HepG2 (cell line): ENCODE measurements at regions of chr12 and their contacts with region 1.

Region 1: GRCh38 chr12:74689071-74689655 is 151.5 kb downstream of the ATXN7L3B start:
- DNase-seq: peak; percentile 20
- ATAC-seq: no peak
- H3K4me3 ChIP-seq: no peak overlapping the region
- H3K27ac ChIP-seq: no peak overlapping the region
- H3K4me1 ChIP-seq: peaks cover 9% of the 10 kb centered on the region; the same call in 1 of the 2 replicates
- H3K27me3 ChIP-seq: no peaks in the 10 kb centered on the region
- CTCF ChIP-seq: peak; percentile 48
- EP300 ChIP-seq: no peak
- POLR2A ChIP-seq: no peak
- RAD21 ChIP-seq: no peak

Region 2: DNA sequence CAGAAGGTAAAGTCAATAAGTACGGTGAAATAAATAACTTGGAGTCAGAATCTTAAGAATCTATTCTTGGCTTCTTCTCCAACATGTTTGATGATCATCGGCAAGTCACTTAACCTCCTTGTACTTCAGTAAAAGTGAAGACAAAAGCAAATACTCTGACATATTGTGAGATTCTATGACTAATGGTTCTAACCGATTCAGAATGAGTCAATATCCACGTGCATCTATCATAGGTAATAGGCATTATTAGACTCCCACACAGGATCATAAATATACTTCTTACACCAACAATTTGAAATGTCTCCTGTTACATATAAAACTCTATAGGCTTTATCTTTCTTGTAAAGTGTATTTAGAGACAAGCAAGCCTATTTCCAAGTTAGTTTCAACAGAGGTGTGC is 295.9 kb before region 1 on chr12:
- CTCF ChIA-PET with region 1: no interaction called
- POLR2A ChIA-PET with region 1: no interaction called
- in situ Hi-C with region 1: no loop called
- intact Hi-C with region 1: no loop called
- DNase-seq: no peak
- ATAC-seq: no peak
- H3K4me3 ChIP-seq: no peak overlapping the region
- H3K27ac ChIP-seq: no peak overlapping the region
- H3K4me1 ChIP-seq: peaks cover 8% of the 10 kb centered on the region; the same call in 1 of the 2 replicates
- H3K27me3 ChIP-seq: no peaks in the 10 kb centered on the region
- CTCF ChIP-seq: no peak
- EP300 ChIP-seq: no peak
- POLR2A ChIP-seq: no peak
- RAD21 ChIP-seq: no peak

Region 3: DNA sequence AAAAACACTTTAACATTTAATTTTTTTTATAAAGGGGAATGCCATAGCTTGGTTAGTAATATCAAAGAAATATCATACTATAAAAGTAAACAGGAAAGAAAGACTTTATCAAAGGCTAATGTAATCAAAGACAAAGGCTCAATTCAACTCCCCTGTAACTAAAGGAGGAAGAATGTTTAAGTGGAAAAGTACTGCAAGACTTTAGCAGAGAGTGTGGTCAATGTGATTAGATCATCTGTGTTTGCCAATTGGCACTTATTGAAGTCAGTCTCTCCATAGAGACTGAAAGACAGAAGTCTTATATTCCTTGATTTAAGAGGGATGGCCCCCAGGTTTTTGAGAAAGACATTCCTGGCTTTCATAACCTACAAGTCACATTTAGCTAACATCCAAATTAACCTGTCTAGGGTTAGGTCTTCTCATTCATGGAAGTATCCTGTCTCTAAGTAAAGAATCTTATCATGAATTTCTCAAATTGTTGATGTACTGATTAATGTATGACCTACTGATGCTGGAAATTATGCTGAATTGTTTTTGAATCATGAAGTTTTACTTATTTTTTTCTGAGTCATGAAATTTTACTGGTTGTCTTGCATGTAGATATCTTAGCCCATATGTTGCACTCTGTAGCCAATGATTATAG is 86.2 kb before region 1 on chr12:
- CTCF ChIA-PET with region 1: no interaction called
- POLR2A ChIA-PET with region 1: no interaction called
- in situ Hi-C with region 1: no loop called
- intact Hi-C with region 1: no loop called
- DNase-seq: no peak
- ATAC-seq: no peak
- H3K4me3 ChIP-seq: no peak overlapping the region
- H3K27ac ChIP-seq: no peak overlapping the region
- H3K4me1 ChIP-seq: no peaks in the 10 kb centered on the region
- H3K27me3 ChIP-seq: no peaks in the 10 kb centered on the region; a peak in 1 of 5 replicates
- CTCF ChIP-seq: no peak
- EP300 ChIP-seq: no peak
- POLR2A ChIP-seq: no peak
- RAD21 ChIP-seq: no peak

Region 4: GRCh38 chr12:75087654-75088053 is 398.5 kb after region 1 on chr12:
- CTCF ChIA-PET with region 1: no interaction called
- POLR2A ChIA-PET with region 1: no interaction called
- in situ Hi-C with region 1: no loop called
- intact Hi-C with region 1: loop called (anchors 10 kb)
- DNase-seq: no peak
- ATAC-seq: no peak
- H3K4me3 ChIP-seq: no peak overlapping the region
- H3K27ac ChIP-seq: no peak overlapping the region
- H3K4me1 ChIP-seq: no peaks in the 10 kb centered on the region
- H3K27me3 ChIP-seq: no peaks in the 10 kb centered on the region
- CTCF ChIP-seq: 0 out of 2 replicates have a peak, but pooled peaks have one; percentile 22
- EP300 ChIP-seq: no peak
- POLR2A ChIP-seq: no peak
- RAD21 ChIP-seq: no peak

Region 5: GRCh38 chr12:75334384-75335030 is 645.3 kb after region 1 on chr12 and contains the start of gene GLIPR1L1:
- CTCF ChIA-PET with region 1: no interaction called
- POLR2A ChIA-PET with region 1: no interaction called
- in situ Hi-C with region 1: no loop called
- intact Hi-C with region 1: loop called (anchors 1 kb)
- DNase-seq: peak; percentile 71
- ATAC-seq: peak; percentile 83
- H3K4me3 ChIP-seq: no peak within 1 kb of the TSS; a peak in 1 of 6 replicates
- H3K27ac ChIP-seq: no peak within 1 kb of the TSS
- H3K4me1 ChIP-seq: no peaks in the 10 kb centered on the region
- H3K27me3 ChIP-seq: no peaks in the 10 kb centered on the region
- CTCF ChIP-seq: peak; percentile 91
- EP300 ChIP-seq: no peak
- POLR2A ChIP-seq: no peak
- RAD21 ChIP-seq: peak; percentile 46; the same call in 1 of the 2 replicates
- total RNA-seq, gene GLIPR1L1: not detected in 2 replicates

Region 6: GRCh38 chr12:75480469-75480949 is 791.3 kb after region 1 on chr12 and contains the start of gene GLIPR1:
- CTCF ChIA-PET with region 1: no interaction called
- POLR2A ChIA-PET with region 1: no interaction called
- in situ Hi-C with region 1: no loop called
- intact Hi-C with region 1: loop called (anchors 2 kb)
- DNase-seq: peak; percentile 45
- ATAC-seq: peak; percentile 90
- H3K4me3 ChIP-seq: peak within 1 kb of the TSS; percentile 44 to 50 (median 47); a peak in 5 of 6 replicates
- H3K27ac ChIP-seq: no peak within 1 kb of the TSS
- H3K4me1 ChIP-seq: peaks cover 26% of the 10 kb centered on the region
- H3K27me3 ChIP-seq: no peaks in the 10 kb centered on the region
- CTCF ChIP-seq: no peak
- EP300 ChIP-seq: no peak
- POLR2A ChIP-seq: 0 out of 4 replicates have a peak, but pooled peaks of 1 of the 2 experiments have one; percentile 23
- RAD21 ChIP-seq: no peak
- total RNA-seq, gene GLIPR1: 2.8 and 5.0 TPM in 2 replicates

Region 7: DNA sequence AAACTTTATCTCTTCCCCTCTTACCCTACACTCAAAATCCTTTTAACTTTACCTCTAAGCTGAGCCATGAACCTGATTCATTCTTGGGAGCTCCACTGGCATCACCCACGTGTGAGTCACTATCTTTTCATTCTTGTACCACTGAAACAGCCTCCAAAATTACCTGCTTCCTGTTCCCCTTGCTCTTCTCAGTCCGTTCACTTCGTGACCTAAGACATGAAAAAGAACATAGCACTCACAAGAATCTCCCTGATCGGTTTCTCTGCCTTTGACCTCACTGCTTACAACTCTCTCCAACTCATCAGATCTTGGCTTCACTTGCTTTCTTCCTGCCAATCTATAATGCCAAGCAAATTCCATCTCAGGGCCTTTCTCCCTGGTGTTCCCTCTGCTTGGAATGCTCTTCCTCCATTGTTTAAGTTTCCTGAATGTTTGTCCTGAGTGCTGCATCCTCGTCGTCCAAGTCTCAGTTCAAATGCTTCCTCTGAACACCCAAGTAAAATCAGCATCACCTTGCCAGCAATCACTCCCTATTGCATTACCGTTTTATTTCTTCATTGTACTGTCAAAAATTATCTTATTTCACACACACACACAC is 800.5 kb after region 1 on chr12:
- CTCF ChIA-PET with region 1: no interaction called
- POLR2A ChIA-PET with region 1: no interaction called
- in situ Hi-C with region 1: no loop called
- intact Hi-C with region 1: loop called (anchors 2 kb)
- DNase-seq: no peak
- ATAC-seq: no peak
- H3K4me3 ChIP-seq: no peak overlapping the region
- H3K27ac ChIP-seq: no peak overlapping the region
- H3K4me1 ChIP-seq: peaks cover 6% of the 10 kb centered on the region
- H3K27me3 ChIP-seq: no peaks in the 10 kb centered on the region; a peak in 1 of 5 replicates
- CTCF ChIP-seq: no peak
- EP300 ChIP-seq: no peak
- POLR2A ChIP-seq: no peak
- RAD21 ChIP-seq: no peak